Transverse colon (tissue), 4 donors: ENCODE measurements at regions of chr19 and their contacts with region 1.

Region 1: DNA sequence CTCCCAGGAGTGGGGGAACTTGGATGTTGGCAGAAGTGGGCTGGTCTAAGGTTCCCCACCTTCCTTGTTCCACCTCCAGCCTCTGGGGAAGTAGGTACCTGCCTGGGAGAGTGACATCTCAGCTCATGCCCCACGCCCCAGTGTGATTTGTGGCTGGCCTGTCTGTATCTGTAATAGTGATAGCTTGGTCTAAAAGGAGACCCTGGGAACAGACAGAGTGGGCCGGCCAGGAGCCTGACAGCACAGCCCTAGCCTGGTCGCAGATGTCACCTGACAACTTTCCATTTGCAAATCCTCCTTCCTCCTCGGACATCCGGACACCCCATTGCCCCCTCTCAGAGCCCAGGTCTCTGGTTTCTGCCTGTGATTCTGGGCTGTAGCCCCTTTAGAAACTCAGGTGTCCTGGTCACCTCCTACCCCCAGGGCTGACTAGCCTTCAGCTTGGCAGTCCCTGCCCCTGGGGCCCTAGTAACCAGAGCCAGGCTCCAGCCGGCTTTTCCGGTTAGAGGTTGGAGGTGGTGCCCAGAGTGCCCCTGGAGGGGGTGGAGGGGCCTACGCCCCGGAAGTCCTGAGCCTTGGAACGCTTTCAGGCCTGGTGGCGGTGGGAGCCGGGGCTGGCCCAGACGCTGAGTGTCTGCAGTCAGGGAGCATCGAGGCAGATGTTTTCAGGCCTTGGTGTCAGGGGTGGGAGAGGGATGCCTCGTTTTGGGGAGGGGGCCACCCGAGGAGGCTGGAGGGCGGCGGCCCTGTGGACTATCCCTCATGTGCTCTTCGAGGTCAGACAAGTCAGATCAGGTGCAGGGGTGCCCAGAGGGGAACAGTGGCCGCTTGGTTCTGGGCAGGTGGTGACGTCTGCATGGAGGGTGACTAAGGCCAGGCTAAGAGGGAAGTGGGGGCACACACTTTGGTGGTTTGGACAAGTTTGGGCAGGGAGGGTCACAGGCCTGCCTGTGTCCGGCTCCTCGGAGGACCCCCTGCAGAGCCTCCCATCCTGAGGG is 6.6 kb downstream of the LRRC8E start:
- DNase-seq: peak; percentile 43
- H3K4me3 ChIP-seq: no peak overlapping the region
- H3K27ac ChIP-seq: no peak overlapping the region
- H3K4me1 ChIP-seq: peaks cover 0 to 6% (median 3%) of the 10 kb centered on the region in 4 donors
- H3K27me3 ChIP-seq: peaks cover 3% of the 10 kb centered on the region
- CTCF ChIP-seq: no peak
- EP300 ChIP-seq: no peak
- POLR2A ChIP-seq: peak; percentile 6

Region 2: GRCh38 chr19:7868676-7869452 is 26.0 kb before region 1 on chr19:
- in situ Hi-C with region 1: no loop called
- intact Hi-C with region 1: no loop called
- DNase-seq: peak; percentile 83
- H3K4me3 ChIP-seq: peak overlapping the region; percentile 18 to 47 (median 32)
- H3K27ac ChIP-seq: peak overlapping the region; percentile 28 to 82 (median 68)
- H3K4me1 ChIP-seq: peaks cover 15 to 43% (median 38%) of the 10 kb centered on the region in 4 donors
- H3K27me3 ChIP-seq: peaks cover 65% of the 10 kb centered on the region
- CTCF ChIP-seq: peak in 4 of 5 experiments; percentile 69 to 93 (median 78)
- EP300 ChIP-seq: no peak
- POLR2A ChIP-seq: no peak

Region 3: GRCh38 chr19:9329999-9330398 is 1435.1 kb after region 1 on chr19:
- in situ Hi-C with region 1: no loop called
- intact Hi-C with region 1: loop called (anchors 5 kb)
- DNase-seq: no peak
- H3K4me3 ChIP-seq: no peak overlapping the region
- H3K27ac ChIP-seq: no peak overlapping the region
- H3K4me1 ChIP-seq: peaks cover 0 to under 1% (median 0%) of the 10 kb centered on the region in 4 donors
- H3K27me3 ChIP-seq: no peaks in the 10 kb centered on the region
- CTCF ChIP-seq: no peak
- EP300 ChIP-seq: no peak
- POLR2A ChIP-seq: no peak